ENCODE measurements at regions of chr14 and their contacts with region 1.

Region 1: GRCh38 chr14:24108336-24108874 is 6.2 kb upstream of the DCAF11 start:
- DNase-seq: no peak
- H3K4me3 ChIP-seq: no peak overlapping the region
- H3K4me3 Mint-ChIP-seq: peak overlapping the region in 1 of 2 donors; percentile 68
- H3K27ac ChIP-seq: peak overlapping the region in 1 of 2 donors; percentile 54
- H3K27ac Mint-ChIP-seq: peak overlapping the region in 6 of 7 donors; percentile 47 to 87 (median 76)
- H3K4me1 ChIP-seq: peaks cover 7 to 12% of the 10 kb centered on the region in 2 donors
- H3K4me1 Mint-ChIP-seq: peaks cover 12% of the 10 kb centered on the region
- H3K27me3 ChIP-seq: no peaks in the 10 kb centered on the region
- H3K27me3 Mint-ChIP-seq: peaks cover 0 to 1% (median 0%) of the 10 kb centered on the region in 3 donors
- CTCF ChIP-seq: no peak

Region 2: GRCh38 chr14:23379366-23380196 is 728.8 kb before region 1 on chr14:
- intact Hi-C with region 1: no loop called
- DNase-seq: peak; percentile 27 to 41 (median 29)
- H3K4me3 ChIP-seq: no peak overlapping the region
- H3K4me3 Mint-ChIP-seq: no peak overlapping the region
- H3K27ac ChIP-seq: no peak overlapping the region
- H3K27ac Mint-ChIP-seq: no peak overlapping the region
- H3K4me1 ChIP-seq: no peaks in the 10 kb centered on the region
- H3K4me1 Mint-ChIP-seq: no peaks in the 10 kb centered on the region
- H3K27me3 ChIP-seq: no peaks in the 10 kb centered on the region
- H3K27me3 Mint-ChIP-seq: peaks cover 3 to 13% (median 10%) of the 10 kb centered on the region in 3 donors
- CTCF ChIP-seq: peak; percentile 95

Region 3: GRCh38 chr14:23984891-23985602 is 123.4 kb before region 1 on chr14:
- intact Hi-C with region 1: loop called in 1 of 2 experiments (anchors 10 kb)
- DNase-seq: peak in 1 of 3 donors; percentile 6
- H3K4me3 ChIP-seq: no peak overlapping the region
- H3K4me3 Mint-ChIP-seq: no peak overlapping the region
- H3K27ac ChIP-seq: no peak overlapping the region
- H3K27ac Mint-ChIP-seq: no peak overlapping the region
- H3K4me1 ChIP-seq: peaks cover 23 to 28% of the 10 kb centered on the region in 2 donors
- H3K4me1 Mint-ChIP-seq: peaks cover 53% of the 10 kb centered on the region
- H3K27me3 ChIP-seq: no peaks in the 10 kb centered on the region
- H3K27me3 Mint-ChIP-seq: peaks cover 0 to 3% (median 2%) of the 10 kb centered on the region in 3 donors
- CTCF ChIP-seq: no peak

Region 4: GRCh38 chr14:24013654-24014514 is 94.5 kb before region 1 on chr14:
- intact Hi-C with region 1: loop called in 1 of 2 experiments (anchors 5 kb)
- DNase-seq: peak; percentile 61 to 79 (median 71)
- H3K4me3 ChIP-seq: no peak overlapping the region
- H3K4me3 Mint-ChIP-seq: no peak overlapping the region
- H3K27ac ChIP-seq: no peak overlapping the region
- H3K27ac Mint-ChIP-seq: no peak overlapping the region
- H3K4me1 ChIP-seq: peaks cover 7 to 18% of the 10 kb centered on the region in 2 donors
- H3K4me1 Mint-ChIP-seq: peaks cover 36% of the 10 kb centered on the region
- H3K27me3 ChIP-seq: no peaks in the 10 kb centered on the region
- H3K27me3 Mint-ChIP-seq: peaks cover 0 to 4% (median 3%) of the 10 kb centered on the region in 3 donors
- CTCF ChIP-seq: peak; percentile 90

Region 5: GRCh38 chr14:24058260-24058950 is 50.0 kb before region 1 on chr14:
- intact Hi-C with region 1: loop called in 1 of 2 experiments (anchors 5 kb)
- DNase-seq: peak in 2 of 3 donors; percentile 42 to 75
- H3K4me3 ChIP-seq: no peak overlapping the region
- H3K4me3 Mint-ChIP-seq: no peak overlapping the region
- H3K27ac ChIP-seq: no peak overlapping the region
- H3K27ac Mint-ChIP-seq: peak overlapping the region in 3 of 7 donors; percentile 52 to 57 (median 55)
- H3K4me1 ChIP-seq: no peaks in the 10 kb centered on the region
- H3K4me1 Mint-ChIP-seq: peaks cover 3% of the 10 kb centered on the region
- H3K27me3 ChIP-seq: peaks cover 0 to 7% of the 10 kb centered on the region in 2 donors
- H3K27me3 Mint-ChIP-seq: peaks cover 9 to 18% (median 15%) of the 10 kb centered on the region in 3 donors
- CTCF ChIP-seq: peak; percentile 92

Region 6: GRCh38 chr14:24093901-24094761 is 14.3 kb before region 1 on chr14 and contains the start of gene PCK2:
- intact Hi-C with region 1: loop called in 1 of 2 experiments (anchors 2 kb)
- DNase-seq: peak; percentile 79 to 85 (median 81)
- H3K4me3 ChIP-seq: peak within 1 kb of the TSS; percentile 64 to 98 (median 72)
- H3K4me3 Mint-ChIP-seq: peak within 1 kb of the TSS; percentile 96 to 97
- H3K27ac ChIP-seq: peak within 1 kb of the TSS; percentile 68 to 92
- H3K27ac Mint-ChIP-seq: peak within 1 kb of the TSS; percentile 89 to 95 (median 93)
- H3K4me1 ChIP-seq: peaks cover 43 to 57% of the 10 kb centered on the region in 2 donors
- H3K4me1 Mint-ChIP-seq: peaks cover 50% of the 10 kb centered on the region
- H3K27me3 ChIP-seq: no peaks in the 10 kb centered on the region
- H3K27me3 Mint-ChIP-seq: peaks cover 0 to 2% (median 1%) of the 10 kb centered on the region in 3 donors
- CTCF ChIP-seq: no peak
- polyA plus RNA-seq, gene PCK2: 29.9 to 34.2 (median 31.3) TPM

Measured in CD14-positive monocyte (primary cell).